GM10248 (cell line): ENCODE measurements at regions of chr13 and their contacts with region 1.

Region 1: DNA sequence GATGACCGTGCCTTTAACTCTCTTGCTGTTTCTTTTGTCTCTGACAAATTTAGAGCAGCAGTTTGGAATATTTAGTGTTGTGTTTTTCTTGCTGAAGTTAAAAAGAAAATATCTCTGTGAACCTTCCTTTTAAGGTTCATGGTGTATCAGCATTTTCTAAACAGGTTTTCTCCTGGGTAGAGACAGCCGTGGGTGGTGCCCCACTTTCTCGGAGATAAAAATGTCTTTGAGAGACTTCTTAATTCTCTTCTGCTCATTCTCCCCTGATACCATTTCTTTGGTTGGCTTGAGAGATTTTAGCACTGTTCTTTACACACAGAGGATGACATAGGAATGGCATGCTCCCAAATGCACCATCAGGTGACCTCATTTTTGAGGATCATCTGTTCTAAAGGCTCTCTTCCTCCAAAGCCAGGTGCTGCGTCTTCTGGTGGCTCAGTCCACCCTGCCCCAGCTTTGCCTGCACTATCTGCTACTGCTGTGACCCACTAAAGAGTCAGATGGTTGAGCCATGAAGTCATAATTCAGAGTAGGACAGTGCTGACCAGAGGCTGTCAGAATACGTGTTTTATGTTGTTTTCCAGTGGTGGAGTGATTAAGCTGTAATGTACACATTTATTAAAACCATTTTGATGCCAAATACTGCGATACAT is 90.3 kb upstream of the SLC10A2 start:
- DNase-seq: no peak
- CTCF ChIP-seq: no peak

Region 2: DNA sequence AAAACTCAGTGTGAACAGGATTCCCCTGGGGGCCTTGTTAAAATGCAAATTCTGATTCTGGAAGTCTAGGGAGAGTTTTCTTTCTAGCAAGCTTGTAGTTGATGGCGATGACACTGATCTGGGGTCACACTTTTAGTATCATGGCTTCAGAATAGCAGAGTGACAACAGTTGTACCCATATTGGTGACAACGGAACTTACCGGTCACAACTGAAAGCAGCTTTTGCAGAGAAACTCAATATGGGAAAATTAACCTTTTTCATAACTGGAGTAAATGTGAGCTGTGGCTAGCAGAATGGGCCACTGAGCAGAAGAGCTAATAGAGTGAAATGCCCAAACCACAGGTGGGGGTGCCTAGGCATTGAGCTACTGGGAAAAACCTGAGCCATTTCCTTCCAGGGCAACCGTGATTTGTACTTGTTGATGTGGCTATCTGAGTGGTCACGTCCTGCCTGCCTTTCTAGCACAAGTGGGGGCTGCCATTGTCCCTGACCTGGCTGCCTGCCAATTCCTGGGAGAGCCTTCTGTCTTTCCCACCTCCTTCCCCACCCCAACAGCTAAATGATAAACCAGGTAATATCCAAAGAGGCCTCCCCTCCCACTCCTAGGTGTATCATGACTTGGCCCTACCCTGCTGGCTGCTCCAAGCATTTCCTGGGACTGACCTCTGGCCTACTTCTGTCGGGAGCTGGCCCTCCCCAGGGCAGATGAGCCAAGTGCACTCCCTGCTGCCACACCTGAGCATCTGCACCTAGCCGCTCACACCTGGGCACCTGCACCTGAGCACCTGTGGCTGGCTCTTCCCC is 88.5 kb before region 1 on chr13:
- CTCF ChIA-PET with region 1: no interaction called
- POLR2A ChIA-PET with region 1: no interaction called
- DNase-seq: peak; percentile 20
- CTCF ChIP-seq: no peak

Region 3: DNA sequence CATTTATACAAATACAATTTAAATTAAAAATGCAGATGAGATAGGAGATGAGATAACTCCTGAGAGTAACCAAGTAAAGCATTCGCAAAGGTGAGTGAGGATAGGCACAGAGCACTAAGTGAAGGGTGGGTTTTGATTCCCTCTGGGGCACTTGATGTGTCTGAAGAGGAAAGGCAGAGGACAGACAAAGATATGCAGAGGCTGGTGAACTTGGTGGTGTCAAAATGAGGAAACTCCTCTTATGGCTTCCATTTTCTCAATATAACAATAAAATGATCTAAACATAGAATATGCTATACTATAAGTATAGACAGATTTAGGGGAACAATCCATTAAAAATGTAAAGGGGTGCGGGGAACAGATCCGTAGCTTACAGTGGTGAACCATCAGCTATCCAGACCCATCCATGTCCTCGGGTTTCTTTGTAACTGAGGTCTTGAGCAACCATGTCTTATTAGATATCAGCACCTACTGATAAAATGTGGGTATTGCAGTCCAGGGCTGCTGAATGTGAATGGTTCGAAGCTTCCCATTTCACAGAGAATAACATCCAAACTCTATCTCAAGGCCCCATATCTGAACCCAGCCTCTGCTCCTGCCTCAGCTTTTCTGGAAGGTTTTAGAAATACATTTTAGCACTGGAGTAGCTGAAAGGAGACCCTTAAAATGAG is 16.3 kb before region 1 on chr13:
- CTCF ChIA-PET with region 1: interaction called, 12 read pairs
- POLR2A ChIA-PET with region 1: no interaction called
- DNase-seq: peak; percentile 52
- CTCF ChIP-seq: peak; percentile 75

Region 4: GRCh38 chr13:103354171-103354570 is 197.7 kb after region 1 on chr13:
- CTCF ChIA-PET with region 1: no interaction called
- POLR2A ChIA-PET with region 1: no interaction called
- DNase-seq: no peak
- CTCF ChIP-seq: no peak